GM10248 (cell line): ENCODE measurements at regions of chr3 and their contacts with region 1.

Region 1: DNA sequence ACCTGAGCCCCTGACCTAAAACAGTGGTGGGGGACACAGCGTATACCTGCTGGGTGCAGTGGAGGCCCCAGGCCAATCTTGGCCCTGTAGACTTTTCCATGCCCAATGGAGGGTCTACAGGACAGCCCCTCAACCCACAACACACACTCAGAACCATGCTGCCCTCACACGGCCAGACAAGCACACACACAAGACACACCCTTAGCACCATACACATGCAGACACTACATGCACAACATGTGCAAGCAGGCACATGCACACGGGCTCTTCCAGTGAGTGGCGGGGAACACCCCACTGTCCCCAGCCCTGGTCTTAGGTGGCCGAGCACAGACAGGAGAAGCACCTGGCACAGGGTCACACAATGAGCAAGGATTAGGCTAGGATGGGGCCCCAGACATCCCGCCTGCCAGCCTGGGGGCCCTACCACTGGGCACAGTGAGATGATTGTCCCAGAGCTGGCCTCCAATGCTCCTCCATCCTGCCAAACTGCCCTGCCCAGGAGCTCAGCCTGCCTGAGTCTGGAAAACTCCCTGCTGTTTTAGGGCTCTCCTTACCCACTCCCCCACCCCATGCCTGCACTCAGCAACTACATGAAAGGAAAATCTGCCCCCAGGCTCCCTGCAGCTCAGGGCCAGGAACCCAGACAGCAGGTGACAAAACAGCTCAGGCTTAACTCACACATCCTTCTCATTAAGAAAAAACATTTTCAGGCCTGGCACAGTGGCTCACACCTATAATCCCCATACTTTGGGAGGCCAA is 15.8 kb downstream of the IQSEC1 start:
- DNase-seq: no peak
- CTCF ChIP-seq: no peak

Region 2: DNA sequence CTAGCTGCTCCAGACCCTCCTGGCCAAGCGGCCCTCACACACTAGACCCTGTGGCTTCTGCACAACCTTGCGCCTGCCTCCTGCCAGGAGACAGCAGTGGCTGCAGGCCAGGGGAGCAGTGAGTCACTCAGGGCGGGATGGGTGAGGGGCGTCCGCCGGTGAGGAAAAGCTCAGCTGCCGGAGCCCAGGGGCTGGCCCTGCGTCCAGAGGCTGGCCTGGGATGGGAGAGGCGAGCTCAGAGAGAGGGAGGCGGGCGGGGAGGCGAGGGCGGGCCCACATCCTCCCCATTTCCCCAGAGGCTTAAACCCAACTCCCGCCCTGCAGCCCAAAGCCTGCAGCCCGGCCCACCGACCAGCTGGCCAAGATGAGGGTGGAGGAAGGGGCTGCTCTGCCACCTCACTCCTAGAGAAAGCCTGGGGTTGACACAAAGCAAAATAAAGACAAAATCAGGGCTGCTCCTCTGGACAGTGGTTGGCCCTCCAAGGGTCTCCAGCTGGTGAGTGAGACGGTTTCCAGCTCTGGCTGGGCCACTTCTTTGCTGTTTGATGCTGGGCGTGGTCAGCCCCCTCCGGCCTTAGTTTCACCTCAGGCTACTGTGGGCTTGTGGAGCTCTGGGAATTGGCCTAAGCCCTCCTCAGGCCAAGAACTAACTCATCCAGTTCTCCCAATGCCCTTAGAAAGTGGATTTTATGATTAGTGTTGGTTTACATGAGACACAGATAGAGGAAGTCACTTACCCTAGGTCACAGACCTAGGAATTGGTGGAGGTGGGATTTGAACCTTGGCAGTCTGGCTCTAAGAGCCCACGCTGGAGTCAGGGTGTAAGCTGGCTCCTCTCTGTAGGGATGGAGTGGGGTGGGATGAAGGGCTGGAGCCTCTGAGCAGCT is 34.9 kb before region 1 on chr3:
- CTCF ChIA-PET with region 1: no interaction called
- POLR2A ChIA-PET with region 1: no interaction called
- DNase-seq: peak; percentile 75
- CTCF ChIP-seq: no peak

Region 3: GRCh38 chr3:13045904-13046568 is 11.4 kb before region 1 on chr3:
- CTCF ChIA-PET with region 1: interaction called, 13 read pairs
- POLR2A ChIA-PET with region 1: no interaction called
- DNase-seq: peak; percentile 83
- CTCF ChIP-seq: no peak